BJ (cell line): ENCODE measurements at regions of chr10 and their contacts with region 1.

Region 1: GRCh38 chr10:3330663-3331062 is 158.1 kb upstream of the PITRM1 start:
- DNase-seq: no peak
- H3K4me3 ChIP-seq: no peak overlapping the region
- H3K27me3 ChIP-seq: no peaks in the 10 kb centered on the region; the same call in 1 of the 2 replicates
- CTCF ChIP-seq: no peak

Region 2: GRCh38 chr10:3668276-3668965 is 337.8 kb after region 1 on chr10:
- CTCF ChIA-PET with region 1: no interaction called
- POLR2A ChIA-PET with region 1: no interaction called
- DNase-seq: peak; percentile 4
- H3K4me3 ChIP-seq: no peak overlapping the region
- H3K27me3 ChIP-seq: peaks cover 2% of the 10 kb centered on the region; the same call in 1 of the 2 replicates
- CTCF ChIP-seq: no peak

Region 3: GRCh38 chr10:3772361-3773171 is 441.9 kb after region 1 on chr10:
- CTCF ChIA-PET with region 1: no interaction called
- POLR2A ChIA-PET with region 1: interaction called, 14 read pairs
- DNase-seq: no peak
- H3K4me3 ChIP-seq: no peak overlapping the region
- H3K27me3 ChIP-seq: no peaks in the 10 kb centered on the region
- CTCF ChIP-seq: no peak